CD14-positive monocyte (primary cell): ENCODE measurements at regions of chr11 and their contacts with region 1.

Region 1: GRCh38 chr11:65013692-65014145 is 241 bp upstream of the ARL2 start:
- DNase-seq: peak; percentile 81 to 82 (median 82)
- H3K4me3 ChIP-seq: peak overlapping the region; percentile 52 to 96 (median 70)
- H3K4me3 Mint-ChIP-seq: peak overlapping the region; percentile 90 to 95
- H3K27ac ChIP-seq: peak overlapping the region; percentile 94 to 97
- H3K27ac Mint-ChIP-seq: peak overlapping the region; percentile 94 to 98 (median 97)
- H3K4me1 ChIP-seq: peaks cover 22 to 32% of the 10 kb centered on the region in 2 donors
- H3K4me1 Mint-ChIP-seq: peaks cover 35% of the 10 kb centered on the region
- H3K27me3 ChIP-seq: no peaks in the 10 kb centered on the region
- H3K27me3 Mint-ChIP-seq: no peaks in the 10 kb centered on the region
- CTCF ChIP-seq: peak; percentile 87

Region 2: GRCh38 chr11:64742087-64742888 is 271.4 kb before region 1 on chr11:
- intact Hi-C with region 1: no loop called
- DNase-seq: peak in 1 of 3 donors; percentile 12
- H3K4me3 ChIP-seq: peak overlapping the region; percentile 71 to 95 (median 91)
- H3K4me3 Mint-ChIP-seq: peak overlapping the region; percentile 87 to 91
- H3K27ac ChIP-seq: peak overlapping the region in 1 of 2 donors; percentile 83
- H3K27ac Mint-ChIP-seq: peak overlapping the region; percentile 31 to 77 (median 68)
- H3K4me1 ChIP-seq: peaks cover 32 to 48% of the 10 kb centered on the region in 2 donors
- H3K4me1 Mint-ChIP-seq: peaks cover 35% of the 10 kb centered on the region
- H3K27me3 ChIP-seq: no peaks in the 10 kb centered on the region
- H3K27me3 Mint-ChIP-seq: peaks cover 0 to 4% (median 1%) of the 10 kb centered on the region in 3 donors
- CTCF ChIP-seq: no peak

Region 3: GRCh38 chr11:64846998-64847666 is 166.6 kb before region 1 on chr11:
- intact Hi-C with region 1: loop called in 1 of 2 experiments (anchors 10 kb)
- DNase-seq: peak; percentile 89 to 94 (median 91)
- H3K4me3 ChIP-seq: no peak overlapping the region
- H3K4me3 Mint-ChIP-seq: no peak overlapping the region
- H3K27ac ChIP-seq: no peak overlapping the region
- H3K27ac Mint-ChIP-seq: peak overlapping the region in 3 of 7 donors; percentile 16 to 33 (median 30)
- H3K4me1 ChIP-seq: peaks cover 35 to 59% of the 10 kb centered on the region in 2 donors
- H3K4me1 Mint-ChIP-seq: peaks cover 52% of the 10 kb centered on the region
- H3K27me3 ChIP-seq: peaks cover 0 to 10% of the 10 kb centered on the region in 2 donors
- H3K27me3 Mint-ChIP-seq: peaks cover 3 to 21% (median 20%) of the 10 kb centered on the region in 3 donors
- CTCF ChIP-seq: peak; percentile 97

Region 4: DNA sequence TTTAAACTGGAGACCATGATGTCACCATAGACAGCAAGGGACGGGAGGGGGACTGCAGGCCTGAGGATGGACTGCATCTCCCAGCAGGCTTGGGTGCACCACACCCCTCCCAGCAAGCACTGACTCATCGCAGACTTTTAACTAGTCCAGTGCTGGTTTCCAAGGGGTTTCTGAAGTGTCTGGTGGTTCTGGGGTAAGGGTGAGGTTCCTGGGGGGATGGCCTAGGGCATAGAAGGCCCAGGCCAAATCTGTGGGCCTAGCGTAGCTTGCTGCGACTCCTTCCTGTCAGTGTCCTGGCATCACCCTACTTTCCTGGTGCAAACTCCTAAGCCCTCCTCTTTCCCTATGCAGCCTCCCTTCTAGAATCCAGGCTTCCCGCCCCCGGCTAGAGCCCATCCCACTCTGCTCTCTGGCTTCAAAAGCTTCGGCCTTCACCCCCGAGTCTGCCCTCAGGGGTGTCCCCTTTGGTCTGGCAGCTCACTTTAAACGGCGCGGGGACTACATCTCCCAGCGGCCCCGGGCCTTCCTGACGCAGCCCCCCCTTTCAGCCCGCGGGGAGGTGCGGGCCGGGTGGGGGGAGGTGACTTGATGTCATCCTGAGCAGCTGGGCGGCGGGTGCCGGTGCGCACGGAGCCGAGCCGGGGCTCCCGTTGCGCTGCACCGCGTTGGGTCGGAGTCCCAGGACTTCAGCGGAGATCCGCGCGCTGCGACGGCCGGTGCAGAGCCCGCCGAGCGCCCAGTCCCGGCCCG is 89.4 kb before region 1 on chr11 and contains the start of gene PPP2R5B:
- intact Hi-C with region 1: loop called in 1 of 2 experiments (anchors 1 kb)
- DNase-seq: peak; percentile 91 to 94 (median 93)
- H3K4me3 ChIP-seq: peak within 1 kb of the TSS; percentile 60 to 95 (median 63)
- H3K4me3 Mint-ChIP-seq: peak within 1 kb of the TSS; percentile 90 to 98
- H3K27ac ChIP-seq: peak within 1 kb of the TSS; percentile 67 to 99
- H3K27ac Mint-ChIP-seq: peak within 1 kb of the TSS; percentile 96 to 100 (median 99)
- H3K4me1 ChIP-seq: peaks cover 14 to 27% of the 10 kb centered on the region in 2 donors
- H3K4me1 Mint-ChIP-seq: peaks cover 16% of the 10 kb centered on the region
- H3K27me3 ChIP-seq: no peaks in the 10 kb centered on the region
- H3K27me3 Mint-ChIP-seq: peaks cover under 1 to 5% (median 3%) of the 10 kb centered on the region in 3 donors
- CTCF ChIP-seq: no peak
- polyA plus RNA-seq, gene PPP2R5B: 9.0 to 26.7 (median 9.4) TPM

Region 5: GRCh38 chr11:65111744-65112414 is 98.2 kb after region 1 on chr11 and contains the start of gene TM7SF2:
- intact Hi-C with region 1: loop called in 1 of 2 experiments (anchors 5 kb)
- DNase-seq: peak; percentile 84 to 90 (median 86)
- H3K4me3 ChIP-seq: peak within 1 kb of the TSS; percentile 31 to 81 (median 40)
- H3K4me3 Mint-ChIP-seq: peak within 1 kb of the TSS; percentile 80 to 91
- H3K27ac ChIP-seq: peak within 1 kb of the TSS in 1 of 2 donors; percentile 12
- H3K27ac Mint-ChIP-seq: peak within 1 kb of the TSS in 6 of 7 donors; percentile 19 to 82 (median 71)
- H3K4me1 ChIP-seq: peaks cover 36 to 43% of the 10 kb centered on the region in 2 donors
- H3K4me1 Mint-ChIP-seq: peaks cover 43% of the 10 kb centered on the region
- H3K27me3 ChIP-seq: peaks cover 0 to 15% of the 10 kb centered on the region in 2 donors
- H3K27me3 Mint-ChIP-seq: peaks cover 13 to 22% (median 15%) of the 10 kb centered on the region in 3 donors
- CTCF ChIP-seq: no peak
- polyA plus RNA-seq, gene TM7SF2: 1.8 to 4.5 (median 1.8) TPM